Right ventricle myocardium inferior (tissue), 1 donor: ENCODE measurements at regions of chr9 and their contacts with region 1.

Region 1: GRCh38 chr9:16092142-16093091 is 539.6 kb downstream of the CCDC171 start:
- DNase-seq: no peak
- ATAC-seq: peak; percentile 80

Region 2: DNA sequence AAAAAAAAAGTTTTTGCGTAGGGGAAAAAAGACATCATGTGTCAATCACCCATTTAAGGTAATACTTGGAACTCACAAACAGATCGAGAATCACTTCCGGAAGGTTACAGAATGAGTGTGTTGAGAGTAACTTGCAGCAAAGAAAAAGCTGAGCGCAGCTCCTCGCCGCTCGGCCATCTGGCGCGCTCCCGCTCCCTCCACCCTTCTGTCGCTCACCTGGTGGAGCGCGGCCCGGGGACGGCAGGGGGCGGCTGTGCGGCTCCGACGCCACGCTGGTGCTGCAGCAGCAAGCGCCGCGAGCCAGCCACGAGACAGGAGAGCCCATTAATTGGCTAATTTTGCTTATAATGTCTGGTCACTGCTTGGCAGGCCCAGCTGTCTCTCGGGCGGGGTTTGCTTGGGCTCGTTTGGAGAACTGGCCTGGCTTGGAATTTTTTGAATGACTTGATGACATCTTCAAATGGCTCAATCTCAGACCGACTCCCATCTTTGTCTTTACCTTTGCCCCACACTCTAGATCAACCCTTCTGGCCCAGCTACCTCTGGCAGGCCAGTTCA is 62.2 kb after region 1 on chr9:
- intact Hi-C with region 1: loop called (anchors 10 kb)
- DNase-seq: no peak
- ATAC-seq: peak; percentile 55